ENCODE measurements at regions of chr11 and their contacts with region 1.

Region 1: DNA sequence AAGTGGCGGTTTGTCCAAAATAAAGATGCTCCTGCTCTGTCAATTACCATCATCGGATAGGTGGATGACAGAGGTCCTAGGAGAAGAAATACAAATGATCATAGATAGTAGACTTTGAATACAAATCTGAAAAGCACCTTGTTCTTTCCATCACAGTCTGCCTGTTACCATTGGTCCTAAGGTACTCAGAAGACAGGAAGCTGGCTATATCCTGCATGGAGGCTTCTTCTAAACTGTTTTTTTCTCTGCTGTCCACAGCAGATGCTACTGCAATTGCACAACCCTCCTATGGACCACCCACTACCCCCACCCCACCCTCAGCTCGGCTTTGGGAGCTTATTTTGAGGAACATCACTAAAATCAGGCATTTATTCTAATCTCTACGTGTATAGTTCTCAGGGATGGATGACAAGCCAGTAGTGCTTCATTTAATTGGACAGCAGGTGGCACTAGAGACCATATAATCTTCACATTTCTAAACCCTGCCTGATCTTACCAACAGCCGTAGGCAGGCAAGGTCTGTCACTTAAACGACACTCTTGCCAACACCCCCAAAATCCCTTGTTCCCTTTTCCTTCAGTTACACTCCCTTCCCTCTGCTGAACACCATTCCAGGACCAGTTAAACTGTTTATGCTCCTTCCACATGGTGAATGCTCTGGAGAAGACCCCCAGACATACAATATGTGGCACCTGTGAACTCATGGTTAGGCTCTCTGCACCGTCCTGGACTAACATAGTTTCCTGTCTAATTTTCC is 6.6 kb upstream of the PTS start:
- DNase-seq: no peak
- H3K4me3 ChIP-seq: no peak overlapping the region
- H3K27ac ChIP-seq: no peak overlapping the region; the same call in 1 of the 2 replicates
- H3K4me1 ChIP-seq: no peaks in the 10 kb centered on the region
- H3K27me3 ChIP-seq: 0 out of 7 replicates have a peak, but pooled peaks cover 0 to 4% (median under 1%) of the 10 kb centered on the region in 4 experiments
- CTCF ChIP-seq: peak in 2 of 3 experiments; percentile 71 to 79; a peak in 3 of 4 replicates
- EP300 ChIP-seq: no peak
- POLR2A ChIP-seq: no peak
- RAD21 ChIP-seq: peak; percentile 93 to 94

Region 2: GRCh38 chr11:112150517-112150916 is 69.1 kb before region 1 on chr11:
- CTCF ChIA-PET with region 1: no interaction called
- POLR2A ChIA-PET with region 1: no interaction called
- DNase-seq: no peak
- H3K4me3 ChIP-seq: no peak overlapping the region
- H3K27ac ChIP-seq: no peak overlapping the region
- H3K4me1 ChIP-seq: no peaks in the 10 kb centered on the region
- H3K27me3 ChIP-seq: no peaks in the 10 kb centered on the region
- CTCF ChIP-seq: no peak
- EP300 ChIP-seq: no peak
- POLR2A ChIP-seq: no peak
- RAD21 ChIP-seq: no peak

Region 3: DNA sequence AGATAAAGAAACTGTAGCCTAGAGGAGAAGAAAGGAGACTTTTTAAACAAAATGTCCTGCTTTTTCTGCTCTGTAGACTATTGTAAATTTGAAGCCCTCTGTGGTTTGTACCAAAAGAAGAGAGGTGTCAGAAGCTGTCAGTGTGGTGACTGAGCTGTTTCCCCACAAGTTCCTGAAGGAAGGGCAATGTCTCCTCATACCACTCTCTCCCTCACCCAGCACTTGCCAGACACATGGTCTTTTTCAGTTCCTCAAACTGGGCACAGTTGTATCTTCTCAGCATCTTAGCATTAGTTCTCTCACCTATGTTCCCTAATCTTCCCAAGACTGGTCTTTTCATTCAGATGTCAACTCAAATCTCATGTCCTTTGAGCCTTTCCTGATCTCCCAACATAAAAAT is 40.1 kb before region 1 on chr11:
- CTCF ChIA-PET with region 1: no interaction called
- POLR2A ChIA-PET with region 1: no interaction called
- DNase-seq: no peak
- H3K4me3 ChIP-seq: no peak overlapping the region
- H3K27ac ChIP-seq: no peak overlapping the region
- H3K4me1 ChIP-seq: peaks cover 0 to 3% (median 0%) of the 10 kb centered on the region in 4 experiments; a peak in 1 of 7 replicates
- H3K27me3 ChIP-seq: no peaks in the 10 kb centered on the region
- CTCF ChIP-seq: no peak
- EP300 ChIP-seq: no peak
- POLR2A ChIP-seq: no peak
- RAD21 ChIP-seq: no peak

Region 4: GRCh38 chr11:112274007-112274783 is 54.5 kb after region 1 on chr11:
- CTCF ChIA-PET with region 1: interaction called, 257 read pairs
- POLR2A ChIA-PET with region 1: no interaction called
- DNase-seq: no peak
- H3K4me3 ChIP-seq: no peak overlapping the region
- H3K27ac ChIP-seq: no peak overlapping the region
- H3K4me1 ChIP-seq: no peaks in the 10 kb centered on the region; a peak in 1 of 7 replicates
- H3K27me3 ChIP-seq: no peaks in the 10 kb centered on the region
- CTCF ChIP-seq: no peak
- EP300 ChIP-seq: no peak
- POLR2A ChIP-seq: no peak
- RAD21 ChIP-seq: no peak

Region 5: GRCh38 chr11:112401036-112401769 is 181.5 kb after region 1 on chr11:
- CTCF ChIA-PET with region 1: no interaction called
- POLR2A ChIA-PET with region 1: no interaction called
- DNase-seq: no peak
- H3K4me3 ChIP-seq: no peak overlapping the region
- H3K27ac ChIP-seq: no peak overlapping the region
- H3K4me1 ChIP-seq: no peaks in the 10 kb centered on the region
- H3K27me3 ChIP-seq: no peaks in the 10 kb centered on the region
- CTCF ChIP-seq: no peak
- EP300 ChIP-seq: no peak
- POLR2A ChIP-seq: no peak
- RAD21 ChIP-seq: no peak

Region 6: GRCh38 chr11:112511271-112511670 is 291.6 kb after region 1 on chr11:
- CTCF ChIA-PET with region 1: no interaction called
- POLR2A ChIA-PET with region 1: no interaction called
- DNase-seq: peak in 1 of 2 experiments; percentile 2
- H3K4me3 ChIP-seq: no peak overlapping the region
- H3K27ac ChIP-seq: no peak overlapping the region
- H3K4me1 ChIP-seq: peaks cover 0 to 2% (median 0%) of the 10 kb centered on the region in 4 experiments; a peak in 2 of 7 replicates
- H3K27me3 ChIP-seq: no peaks in the 10 kb centered on the region
- CTCF ChIP-seq: no peak
- EP300 ChIP-seq: no peak
- POLR2A ChIP-seq: no peak
- RAD21 ChIP-seq: no peak

Measured in H1 (cell line).